ENCODE measurements at regions of chr17 and their contacts with region 1.

Region 1: GRCh38 chr17:49361902-49362722 is at the start of gene ZNF652:
- DNase-seq: peak; percentile 92
- H3K4me3 ChIP-seq: peak within 1 kb of the TSS; percentile 93 to 99 (median 99)
- H3K27ac ChIP-seq: peak within 1 kb of the TSS; percentile 93 to 98
- H3K4me1 ChIP-seq: peaks cover 0 to 15% of the 10 kb centered on the region in 2 donors
- H3K27me3 ChIP-seq: no peaks in the 10 kb centered on the region
- CTCF ChIP-seq: no peak
- POLR2A ChIP-seq: no peak
- total RNA-seq, gene ZNF652: 34.2 to 157 (median 72.4) TPM

Region 2: GRCh38 chr17:49297141-49297540 is 65.0 kb before region 1 on chr17:
- intact Hi-C with region 1: loop called (anchors 2 kb)
- DNase-seq: no peak
- H3K4me3 ChIP-seq: no peak overlapping the region
- H3K27ac ChIP-seq: no peak overlapping the region
- H3K4me1 ChIP-seq: no peaks in the 10 kb centered on the region
- H3K27me3 ChIP-seq: no peaks in the 10 kb centered on the region
- CTCF ChIP-seq: no peak
- POLR2A ChIP-seq: no peak

Region 3: GRCh38 chr17:49343273-49343672 is 18.8 kb before region 1 on chr17:
- intact Hi-C with region 1: no loop called
- DNase-seq: no peak
- H3K4me3 ChIP-seq: no peak overlapping the region
- H3K27ac ChIP-seq: no peak overlapping the region
- H3K4me1 ChIP-seq: no peaks in the 10 kb centered on the region
- H3K27me3 ChIP-seq: no peaks in the 10 kb centered on the region
- CTCF ChIP-seq: no peak
- POLR2A ChIP-seq: no peak

Region 4: DNA sequence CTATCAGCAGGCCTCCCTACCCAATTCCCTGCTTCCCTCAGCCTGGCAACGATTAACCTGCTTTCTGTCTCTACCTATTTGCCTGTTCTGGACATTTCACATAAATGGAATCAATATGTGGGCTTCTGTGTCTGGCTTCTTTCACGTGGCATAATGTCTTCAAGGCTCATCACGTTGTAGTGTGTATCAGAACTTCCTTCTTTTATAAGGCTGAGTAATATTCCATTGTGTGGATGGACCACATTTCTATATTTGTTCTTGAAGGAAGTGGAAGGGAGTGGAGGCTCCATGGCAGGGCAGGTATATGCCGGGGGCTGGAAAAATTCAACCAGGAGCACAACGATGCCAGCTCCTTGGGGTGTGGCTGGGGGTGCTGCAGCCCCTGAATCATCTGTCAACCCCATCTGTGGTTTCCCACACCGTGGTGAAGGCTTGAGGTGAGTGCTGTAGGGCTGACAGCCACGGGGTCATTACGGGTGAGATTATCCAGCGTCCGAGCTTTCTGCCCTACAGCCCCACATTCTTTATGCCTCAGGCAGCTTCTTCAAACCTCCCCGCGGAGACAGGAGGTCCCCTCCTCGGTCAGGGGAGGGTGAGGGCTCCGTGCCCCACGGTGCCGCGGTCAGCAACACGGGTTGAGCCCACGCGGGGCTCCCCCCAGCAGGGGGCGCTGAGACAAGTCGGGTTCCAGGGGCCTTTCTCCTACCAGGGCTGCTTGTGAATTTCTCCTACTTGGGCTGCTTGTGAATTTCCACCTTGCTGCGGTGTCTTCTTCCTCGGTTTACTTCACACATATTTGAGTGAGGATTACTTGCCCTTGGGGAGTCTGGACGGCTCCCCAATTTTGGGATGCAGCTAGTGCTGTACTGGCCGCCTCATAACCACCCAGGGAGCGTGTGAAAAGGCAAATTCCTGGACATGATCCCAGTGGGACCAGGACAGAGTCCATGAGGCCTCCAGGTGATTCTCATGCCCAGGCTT is 1454.9 kb after region 1 on chr17:
- intact Hi-C with region 1: no loop called
- DNase-seq: no peak
- H3K4me3 ChIP-seq: peak overlapping the region in 1 of 3 donors; percentile 36
- H3K27ac ChIP-seq: peak overlapping the region in 1 of 2 donors; percentile 27
- H3K4me1 ChIP-seq: no peaks in the 10 kb centered on the region
- H3K27me3 ChIP-seq: no peaks in the 10 kb centered on the region
- CTCF ChIP-seq: peak; percentile 50 to 62 (median 53)
- POLR2A ChIP-seq: no peak

Measured in breast epithelium (tissue), 4 donors.